Heart left ventricle (tissue), 16 donors: ENCODE measurements at regions of chr9 and their contacts with region 1.

Region 1: GRCh38 chr9:83707768-83708514 is at the start of gene UBQLN1:
- DNase-seq: peak; percentile 95 to 97 (median 96)
- ATAC-seq: peak; percentile 96 to 98 (median 96)
- H3K4me3 ChIP-seq: peak within 1 kb of the TSS; percentile 64 to 99 (median 86)
- H3K27ac ChIP-seq: peak within 1 kb of the TSS; percentile 92 to 100 (median 98)
- H3K4me1 ChIP-seq: peaks cover 0 to 48% (median 25%) of the 10 kb centered on the region in 12 donors
- H3K27me3 ChIP-seq: no peaks in the 10 kb centered on the region
- CTCF ChIP-seq: peak in 1 of 12 donors; percentile 3
- POLR2A ChIP-seq: peak; percentile 43 to 86
- total RNA-seq, gene UBQLN1: 88.9 to 144 (median 103) TPM

Region 2: DNA sequence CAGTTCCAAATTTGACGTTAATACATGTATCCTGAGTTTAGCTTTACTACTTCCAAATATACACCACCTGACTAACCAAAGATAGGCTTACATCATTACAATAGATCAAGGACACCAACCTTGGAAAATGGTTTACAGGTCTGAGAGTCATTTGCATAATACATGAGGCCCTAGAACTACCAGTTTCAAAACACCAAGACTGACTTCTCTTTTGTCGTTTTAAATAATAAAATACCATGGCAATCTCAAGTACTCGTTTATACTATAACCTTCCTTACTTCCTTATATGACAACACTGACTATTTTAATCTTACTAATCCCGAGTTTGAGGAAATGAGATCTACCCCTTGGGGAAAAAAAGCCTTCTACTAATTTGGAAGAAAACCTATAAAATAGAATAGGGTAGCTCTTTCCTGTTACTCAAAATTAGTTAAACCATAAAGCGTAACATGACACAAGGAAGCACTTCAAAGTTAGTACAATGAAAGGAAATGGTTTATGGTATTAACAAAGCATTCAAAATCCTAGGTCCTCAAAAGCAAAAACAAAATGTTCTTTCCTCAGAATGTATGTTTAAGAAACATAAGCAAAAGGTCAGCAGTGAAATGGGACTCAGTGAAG is 42.3 kb before region 1 on chr9:
- intact Hi-C with region 1: loop called in 1 of 10 experiments (anchors 5 kb)
- DNase-seq: no peak
- ATAC-seq: peak in 1 of 4 donors; percentile 18
- H3K4me3 ChIP-seq: no peak overlapping the region
- H3K27ac ChIP-seq: peak overlapping the region in 3 of 12 donors; percentile 15 to 34 (median 21)
- H3K4me1 ChIP-seq: peaks cover 0 to 14% (median 0%) of the 10 kb centered on the region in 12 donors
- H3K27me3 ChIP-seq: no peaks in the 10 kb centered on the region
- CTCF ChIP-seq: no peak
- POLR2A ChIP-seq: no peak

Region 3: GRCh38 chr9:83920927-83921707 is 213.2 kb after region 1 on chr9 and contains the start of gene KIF27:
- intact Hi-C with region 1: loop called in 2 of 10 experiments (anchors 10 kb)
- DNase-seq: peak; percentile 99 to 100 (median 99)
- ATAC-seq: peak; percentile 98 to 99 (median 99)
- H3K4me3 ChIP-seq: peak within 1 kb of the TSS; percentile 65 to 96 (median 76)
- H3K27ac ChIP-seq: peak within 1 kb of the TSS; percentile 66 to 98 (median 92)
- H3K4me1 ChIP-seq: peaks cover 0 to 12% (median 5%) of the 10 kb centered on the region in 12 donors
- H3K27me3 ChIP-seq: no peaks in the 10 kb centered on the region
- CTCF ChIP-seq: peak in 11 of 12 donors; percentile 21 to 56 (median 37)
- POLR2A ChIP-seq: peak; percentile 26 to 89
- total RNA-seq, gene KIF27: 2.5 to 4.2 (median 3.2) TPM